A673 (cell line): ENCODE measurements at regions of chr16 and their contacts with region 1.

Region 1: GRCh38 chr16:27109666-27110523 is 43.2 kb downstream of the C16orf82 start:
- DNase-seq: peak; percentile 85
- H3K4me3 ChIP-seq: peak overlapping the region; percentile 55
- H3K27ac ChIP-seq: peak overlapping the region; percentile 38
- H3K4me1 ChIP-seq: peaks cover 5% of the 10 kb centered on the region
- H3K27me3 ChIP-seq: no peaks in the 10 kb centered on the region
- CTCF ChIP-seq: peak; percentile 52

Region 2: DNA sequence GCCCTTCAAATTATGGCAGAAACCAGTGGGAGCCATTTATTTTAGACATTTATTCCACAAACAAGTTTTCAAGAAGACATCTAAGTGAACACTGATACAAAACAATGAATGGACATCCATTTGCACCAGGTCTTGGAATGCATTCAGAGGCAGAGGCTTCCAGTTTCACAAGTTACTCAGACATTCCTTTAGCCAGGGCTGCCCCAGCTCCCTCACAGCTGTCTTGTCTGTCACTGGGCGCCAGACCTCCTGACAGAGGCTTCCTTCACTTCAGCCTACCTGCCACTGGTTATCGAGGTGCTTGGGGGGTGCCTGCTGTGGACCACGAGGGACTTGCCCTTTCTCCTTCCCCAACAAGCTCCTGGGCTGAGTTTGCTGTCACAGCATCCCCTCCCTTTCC is 1873.9 kb before region 1 on chr16:
- CTCF ChIA-PET with region 1: no interaction called
- POLR2A ChIA-PET with region 1: no interaction called
- intact Hi-C with region 1: loop called (anchors 10 kb)
- DNase-seq: no peak
- H3K4me3 ChIP-seq: no peak overlapping the region
- H3K27ac ChIP-seq: no peak overlapping the region
- H3K4me1 ChIP-seq: no peaks in the 10 kb centered on the region
- H3K27me3 ChIP-seq: no peaks in the 10 kb centered on the region
- CTCF ChIP-seq: no peak

Region 3: GRCh38 chr16:25279491-25279890 is 1830.4 kb before region 1 on chr16:
- CTCF ChIA-PET with region 1: interaction called, 7 read pairs
- POLR2A ChIA-PET with region 1: no interaction called
- intact Hi-C with region 1: loop called (anchors 5 kb)
- DNase-seq: no peak
- H3K4me3 ChIP-seq: no peak overlapping the region
- H3K27ac ChIP-seq: no peak overlapping the region
- H3K4me1 ChIP-seq: no peaks in the 10 kb centered on the region
- H3K27me3 ChIP-seq: no peaks in the 10 kb centered on the region
- CTCF ChIP-seq: no peak

Region 4: DNA sequence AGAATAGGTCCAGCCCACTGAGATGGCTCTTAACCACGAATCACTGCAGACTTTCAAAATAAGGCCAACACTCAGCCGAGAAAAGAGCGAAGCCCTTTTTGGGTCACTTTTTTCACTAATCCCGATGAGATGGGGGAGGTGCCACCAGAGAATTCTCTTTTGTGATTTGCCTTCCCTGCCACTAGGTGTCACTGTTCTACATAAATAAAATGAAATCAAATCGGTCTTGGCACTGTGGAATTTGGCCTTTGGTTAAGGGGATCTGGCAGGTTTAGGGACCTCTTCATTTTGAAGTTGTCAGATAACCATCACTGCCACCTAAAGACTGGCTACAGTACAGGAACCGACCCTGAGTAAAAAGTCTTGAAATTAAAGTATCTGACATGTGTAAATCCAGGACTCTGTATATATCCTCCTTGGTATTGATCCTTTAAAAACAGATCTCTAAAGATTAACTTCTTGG is 1271.1 kb before region 1 on chr16:
- CTCF ChIA-PET with region 1: interaction called, 3 read pairs
- POLR2A ChIA-PET with region 1: no interaction called
- intact Hi-C with region 1: loop called (anchors 5 kb)
- DNase-seq: peak; percentile 90
- H3K4me3 ChIP-seq: peak overlapping the region; percentile 29
- H3K27ac ChIP-seq: peak overlapping the region; percentile 2
- H3K4me1 ChIP-seq: peaks cover 38% of the 10 kb centered on the region
- H3K27me3 ChIP-seq: no peaks in the 10 kb centered on the region
- CTCF ChIP-seq: peak; percentile 81

Region 5: DNA sequence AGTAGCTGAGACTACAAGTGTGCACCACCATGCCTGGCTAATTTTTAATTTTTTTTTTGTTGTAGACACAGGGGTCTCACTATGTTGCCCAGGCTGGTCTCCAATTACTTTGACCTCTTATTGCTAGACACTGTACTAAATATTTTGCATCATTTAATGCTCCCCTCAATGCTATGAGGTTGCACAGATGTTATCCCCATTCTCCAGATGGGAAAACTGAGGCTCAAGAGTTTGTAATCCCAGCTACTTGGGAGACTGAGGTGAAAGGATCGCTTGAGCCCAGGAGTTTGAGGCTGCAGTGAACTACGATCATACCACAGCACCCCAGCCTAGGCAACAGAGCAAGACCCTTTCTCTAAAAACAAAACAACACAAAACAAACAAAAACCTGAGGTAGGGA is 486.5 kb before region 1 on chr16:
- CTCF ChIA-PET with region 1: interaction called, 10 read pairs
- POLR2A ChIA-PET with region 1: no interaction called
- intact Hi-C with region 1: no loop called
- DNase-seq: no peak
- H3K4me3 ChIP-seq: no peak overlapping the region
- H3K27ac ChIP-seq: no peak overlapping the region
- H3K4me1 ChIP-seq: no peaks in the 10 kb centered on the region
- H3K27me3 ChIP-seq: no peaks in the 10 kb centered on the region
- CTCF ChIP-seq: no peak

Region 6: GRCh38 chr16:26889740-26890139 is 220.2 kb before region 1 on chr16:
- CTCF ChIA-PET with region 1: interaction called, 11 read pairs
- POLR2A ChIA-PET with region 1: no interaction called
- intact Hi-C with region 1: no loop called
- DNase-seq: peak; percentile 69
- H3K4me3 ChIP-seq: no peak overlapping the region
- H3K27ac ChIP-seq: no peak overlapping the region
- H3K4me1 ChIP-seq: peaks cover 4% of the 10 kb centered on the region
- H3K27me3 ChIP-seq: no peaks in the 10 kb centered on the region
- CTCF ChIP-seq: no peak

Region 7: GRCh38 chr16:27335349-27336053 is 225.6 kb after region 1 on chr16:
- CTCF ChIA-PET with region 1: interaction called, 12 read pairs
- POLR2A ChIA-PET with region 1: no interaction called
- intact Hi-C with region 1: no loop called
- DNase-seq: no peak
- H3K4me3 ChIP-seq: no peak overlapping the region
- H3K27ac ChIP-seq: no peak overlapping the region
- H3K4me1 ChIP-seq: peaks cover 12% of the 10 kb centered on the region
- H3K27me3 ChIP-seq: no peaks in the 10 kb centered on the region
- CTCF ChIP-seq: no peak